BJ (cell line): ENCODE measurements at regions of chr4 and their contacts with region 1.

Region 1: DNA sequence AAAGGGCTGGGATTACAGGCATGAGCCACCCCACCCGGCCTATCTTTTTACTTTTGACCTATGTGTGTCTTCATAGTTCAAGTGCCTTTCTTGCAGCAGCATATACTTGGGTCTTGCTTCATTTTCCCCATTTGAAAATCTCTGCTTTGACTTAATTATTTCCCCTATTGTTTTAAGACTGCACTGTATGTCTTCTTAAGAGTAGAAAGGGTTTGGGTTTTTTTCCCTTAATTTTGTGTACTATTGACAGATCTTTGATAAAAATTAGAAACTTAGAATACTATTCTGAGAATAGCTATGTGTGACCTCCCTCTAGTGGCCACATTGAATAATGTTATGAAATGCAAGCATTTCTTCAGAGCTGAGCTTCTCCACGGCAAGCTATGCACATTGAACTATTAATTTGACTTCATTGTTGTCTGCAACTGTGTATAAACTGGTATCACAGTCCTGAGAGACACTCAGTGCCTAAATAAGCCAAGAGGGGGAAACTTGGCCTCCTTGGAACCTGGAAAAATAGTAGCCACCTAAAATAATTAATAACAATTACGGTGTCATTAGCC is 8.7 kb upstream of the SLC25A4 start:
- DNase-seq: no peak
- H3K4me3 ChIP-seq: no peak overlapping the region
- H3K27me3 ChIP-seq: peaks cover 4% of the 10 kb centered on the region
- CTCF ChIP-seq: peak; percentile 62

Region 2: GRCh38 chr4:185005216-185005819 is 129.1 kb before region 1 on chr4:
- CTCF ChIA-PET with region 1: interaction called, 14 read pairs
- POLR2A ChIA-PET with region 1: no interaction called
- DNase-seq: no peak
- H3K4me3 ChIP-seq: no peak overlapping the region
- H3K27me3 ChIP-seq: peaks cover 9% of the 10 kb centered on the region
- CTCF ChIP-seq: peak; percentile 98

Region 3: DNA sequence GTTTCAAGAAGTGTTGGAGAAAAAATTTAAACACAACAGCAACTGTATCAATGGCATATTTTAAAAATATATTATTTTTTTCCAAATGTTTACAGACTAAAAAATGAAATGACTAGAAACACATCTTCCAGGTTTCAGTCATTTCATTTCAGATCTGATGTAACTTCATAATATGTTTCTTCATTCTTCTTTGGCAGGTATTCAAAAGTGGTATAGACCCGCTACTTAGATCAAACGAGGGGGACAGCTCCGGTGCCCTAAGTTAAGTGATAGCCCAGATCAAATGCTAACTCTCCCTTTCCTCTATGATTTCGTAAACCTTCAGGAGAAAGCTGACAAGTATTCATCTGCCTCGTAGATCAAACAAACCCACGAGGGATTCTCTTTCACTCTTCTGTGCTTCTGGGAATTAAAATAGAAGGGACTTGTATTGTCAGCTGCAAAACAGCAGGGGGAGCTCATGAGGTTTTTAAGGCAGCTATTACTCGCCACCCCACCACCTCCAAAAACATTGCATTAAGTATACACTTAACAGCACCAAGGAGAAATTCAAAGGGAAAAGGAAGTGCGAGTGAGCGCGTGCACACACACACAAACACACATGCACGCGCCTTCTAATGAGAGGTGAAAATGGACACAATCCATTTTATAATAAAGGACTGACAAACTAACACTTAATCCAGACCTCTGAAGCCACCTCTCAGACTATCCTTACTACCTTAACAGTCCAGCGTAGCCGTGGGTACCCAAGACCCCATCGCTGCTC is 94.7 kb before region 1 on chr4:
- CTCF ChIA-PET with region 1: interaction called, 39 read pairs
- POLR2A ChIA-PET with region 1: no interaction called
- DNase-seq: peak; percentile 3
- H3K4me3 ChIP-seq: peak overlapping the region; percentile 18; the same call in 1 of the 2 replicates
- H3K27me3 ChIP-seq: no peaks in the 10 kb centered on the region; the same call in none of the 2 replicates
- CTCF ChIP-seq: peak; percentile 78

Region 4: DNA sequence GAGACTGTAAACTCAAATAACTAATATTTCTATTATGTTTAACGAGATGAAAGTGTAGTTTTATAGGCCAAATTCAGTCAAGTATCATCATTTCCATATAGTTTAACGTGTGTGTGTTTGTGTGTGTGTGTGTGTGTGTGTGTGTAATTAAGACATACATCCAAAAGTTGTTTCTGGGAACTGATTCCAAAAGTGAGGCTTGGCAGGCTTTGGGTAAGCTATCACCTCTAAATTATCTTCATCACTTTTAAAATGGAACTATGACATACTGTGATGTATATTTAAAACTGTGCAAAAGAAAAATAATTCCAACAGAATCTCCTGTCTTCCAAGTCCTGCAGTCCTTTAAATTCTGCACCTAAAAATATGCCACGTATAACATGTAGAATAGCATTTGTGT is 10.4 kb before region 1 on chr4:
- CTCF ChIA-PET with region 1: interaction called, 11 read pairs
- POLR2A ChIA-PET with region 1: no interaction called
- DNase-seq: no peak
- H3K4me3 ChIP-seq: no peak overlapping the region
- H3K27me3 ChIP-seq: peaks cover 9% of the 10 kb centered on the region
- CTCF ChIP-seq: no peak